Right ventricle myocardium inferior (tissue), 1 donor: ENCODE measurements at regions of chr5 and their contacts with region 1.

Region 1: DNA sequence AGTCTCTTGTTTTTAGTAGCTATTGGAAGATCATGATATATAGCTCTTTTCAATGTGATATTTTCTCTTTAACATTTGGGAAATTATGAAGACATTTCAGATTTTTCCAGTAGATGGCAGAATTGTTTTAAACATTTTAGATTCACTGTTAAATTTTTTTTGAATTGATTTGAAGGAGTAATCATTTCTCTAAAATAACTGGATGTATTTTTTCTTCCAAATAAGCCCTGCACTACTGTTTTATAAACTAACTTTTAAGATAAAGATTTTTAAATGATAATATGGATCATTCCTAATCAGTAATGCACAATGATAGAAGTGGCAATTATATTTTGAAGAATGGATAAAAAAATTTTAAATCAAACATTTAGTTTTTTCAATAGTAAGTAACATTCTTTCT is 14.2 kb downstream of the NDUFAF2 start:
- DNase-seq: no peak
- ATAC-seq: no peak

Region 2: DNA sequence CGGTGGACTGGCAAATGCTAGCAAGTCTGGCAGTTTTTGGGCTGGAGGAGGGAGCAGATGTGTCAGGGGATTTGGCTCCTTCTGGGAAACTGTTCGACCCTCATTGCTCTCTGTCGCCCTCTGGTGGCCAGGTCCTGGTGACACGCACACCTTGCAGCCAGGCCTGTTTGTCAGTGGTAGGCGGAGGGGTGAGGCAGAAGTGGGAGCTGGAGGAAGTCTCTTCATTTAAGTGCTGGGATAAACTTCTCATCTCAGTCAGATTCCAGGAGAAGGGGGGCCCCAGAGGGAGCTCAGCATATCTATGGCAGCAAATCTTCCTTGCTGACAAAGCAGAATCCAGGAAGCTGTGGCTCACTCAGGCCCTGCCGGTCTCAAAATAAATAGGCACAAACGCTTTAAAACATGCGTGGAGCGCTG is 699.4 kb after region 1 on chr5:
- intact Hi-C with region 1: loop called (anchors 5 kb)
- DNase-seq: peak; percentile 90
- ATAC-seq: peak; percentile 82

Region 3: GRCh38 chr5:61817472-61818326 is 858.5 kb after region 1 on chr5:
- intact Hi-C with region 1: loop called (anchors 10 kb)
- DNase-seq: no peak
- ATAC-seq: no peak

Region 4: DNA sequence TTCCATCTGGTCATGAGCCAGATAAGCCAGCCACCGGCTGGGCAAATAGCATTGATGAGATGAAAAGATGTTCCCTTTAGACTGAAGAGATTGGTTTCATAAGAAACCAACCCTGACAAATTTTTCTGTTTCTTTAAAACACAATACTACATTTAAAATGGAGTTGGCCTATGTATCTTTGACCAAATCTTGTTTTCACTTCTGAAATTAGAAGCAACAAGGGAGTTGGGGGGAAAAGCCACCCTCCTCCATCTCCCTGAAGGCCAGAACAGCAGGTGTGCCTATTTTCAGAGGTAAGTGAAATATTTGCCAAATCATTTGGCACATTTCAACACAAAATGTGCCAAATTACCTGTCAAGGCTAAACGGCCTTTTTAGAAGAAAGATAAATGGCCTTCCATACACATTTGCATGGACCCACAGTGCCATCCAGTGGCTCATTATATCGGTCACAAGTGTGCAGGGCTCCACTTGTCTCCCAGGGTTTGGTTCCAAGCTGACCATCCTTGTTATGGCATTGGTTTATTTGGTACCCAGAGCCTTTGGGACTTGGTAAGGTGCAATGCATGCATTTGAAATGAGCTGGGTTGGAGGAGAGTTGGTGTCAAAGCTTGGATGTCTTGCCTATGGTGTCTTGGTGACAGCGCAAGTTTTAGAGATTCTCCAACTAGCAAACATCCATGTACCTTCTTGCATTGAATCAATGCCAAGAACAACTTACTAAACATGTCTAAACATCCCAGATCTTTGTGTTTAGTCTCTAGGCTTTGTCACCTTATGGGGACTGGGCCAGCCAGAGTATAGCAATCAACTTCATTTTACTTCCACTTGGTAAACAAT is 974.9 kb after region 1 on chr5:
- intact Hi-C with region 1: loop called (anchors 5 kb)
- DNase-seq: no peak
- ATAC-seq: no peak